ENCODE measurements at regions of chrX and their contacts with region 1.

Region 1: DNA sequence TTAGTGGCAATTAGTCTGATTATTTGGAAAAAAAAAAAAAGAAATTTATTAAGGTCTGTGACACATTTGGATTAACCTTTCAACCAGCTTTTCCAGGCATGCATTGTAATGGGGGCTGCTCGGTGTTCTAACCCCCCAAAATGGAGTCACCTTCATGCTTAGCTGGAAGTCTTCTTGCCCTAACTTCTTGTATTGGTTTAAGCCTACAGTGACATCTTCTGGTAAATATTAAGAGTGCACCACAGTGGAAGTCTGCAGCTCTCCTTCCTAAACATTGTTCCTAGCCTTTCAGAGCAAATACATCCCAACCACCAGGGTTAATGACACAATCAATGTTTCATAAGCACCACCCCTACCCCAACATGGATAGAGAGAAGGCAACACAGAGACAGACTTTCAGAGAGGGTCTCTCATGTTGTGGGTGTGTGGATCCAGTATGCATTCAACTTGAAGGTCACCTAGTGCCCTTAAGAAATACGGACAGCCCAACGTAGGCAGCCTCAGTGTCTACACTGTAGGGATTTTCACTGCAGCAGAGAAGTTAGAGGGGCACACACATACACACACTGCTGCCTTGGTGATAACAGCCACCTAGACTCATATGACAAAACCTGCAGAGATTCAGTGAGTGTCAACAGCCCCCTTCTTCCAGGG is 142.9 kb upstream of the MBNL3 start:
- DNase-seq: peak; percentile 2
- H3K4me3 Mint-ChIP-seq: no peak overlapping the region
- H3K27ac Mint-ChIP-seq: no peak overlapping the region
- H3K4me1 Mint-ChIP-seq: peaks cover 9% of the 10 kb centered on the region
- H3K27me3 Mint-ChIP-seq: no peaks in the 10 kb centered on the region
- CTCF ChIP-seq: peak; percentile 28

Region 2: GRCh38 chrX:132092439-132093065 is 539.2 kb before region 1 on chrX:
- CTCF ChIA-PET with region 1: interaction called, 6 read pairs
- intact Hi-C with region 1: loop called (anchors 5 kb)
- DNase-seq: peak; percentile 52
- H3K4me3 Mint-ChIP-seq: no peak overlapping the region
- H3K27ac Mint-ChIP-seq: no peak overlapping the region
- H3K4me1 Mint-ChIP-seq: no peaks in the 10 kb centered on the region
- H3K27me3 Mint-ChIP-seq: no peaks in the 10 kb centered on the region
- CTCF ChIP-seq: peak; percentile 41

Region 3: DNA sequence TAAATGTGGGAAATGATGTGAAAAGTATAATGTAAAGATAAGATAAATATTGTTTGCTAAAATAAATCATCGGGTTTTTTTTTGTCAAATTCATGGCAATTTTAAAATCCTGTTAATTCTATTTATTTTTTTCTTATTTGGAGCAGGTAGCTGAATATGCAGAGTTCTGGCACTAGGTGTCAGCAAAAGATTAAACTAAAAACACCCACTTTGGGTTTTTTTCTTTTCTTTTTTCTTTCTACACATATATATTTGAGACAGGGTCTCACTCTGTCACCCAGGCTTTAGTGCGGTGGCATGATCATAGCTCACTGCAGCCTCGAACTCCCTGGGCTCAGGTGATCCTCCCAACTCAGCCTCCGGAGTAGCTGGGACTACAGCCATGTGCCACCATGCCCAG is 405.5 kb before region 1 on chrX:
- CTCF ChIA-PET with region 1: interaction called, 5 read pairs
- intact Hi-C with region 1: loop called (anchors 5 kb)
- DNase-seq: no peak
- H3K4me3 Mint-ChIP-seq: no peak overlapping the region
- H3K27ac Mint-ChIP-seq: no peak overlapping the region
- H3K4me1 Mint-ChIP-seq: peaks cover 8% of the 10 kb centered on the region
- H3K27me3 Mint-ChIP-seq: no peaks in the 10 kb centered on the region
- CTCF ChIP-seq: no peak

Region 4: DNA sequence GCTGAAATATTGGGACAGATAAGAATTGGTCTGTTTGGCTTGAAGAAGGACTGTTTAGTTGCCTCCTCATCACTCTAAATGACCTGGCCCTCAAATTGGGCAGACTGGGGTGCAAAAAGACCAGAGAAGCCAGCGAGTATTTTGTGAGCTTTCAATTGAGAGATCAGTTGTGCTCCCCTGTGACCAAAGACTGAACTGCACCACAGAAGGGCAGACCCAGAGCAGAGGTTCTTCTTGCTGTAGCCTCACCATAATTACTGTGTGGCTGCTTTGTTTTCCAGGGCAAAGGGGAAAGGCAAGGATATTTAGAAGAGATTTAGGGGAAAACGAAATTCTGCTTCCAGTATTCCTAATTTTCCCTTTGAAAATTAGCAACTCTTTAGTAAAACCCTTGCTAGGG is 38.8 kb before region 1 on chrX:
- CTCF ChIA-PET with region 1: no interaction called
- intact Hi-C with region 1: no loop called
- DNase-seq: peak; percentile 20
- H3K4me3 Mint-ChIP-seq: no peak overlapping the region
- H3K27ac Mint-ChIP-seq: no peak overlapping the region
- H3K4me1 Mint-ChIP-seq: no peaks in the 10 kb centered on the region
- H3K27me3 Mint-ChIP-seq: no peaks in the 10 kb centered on the region
- CTCF ChIP-seq: peak; percentile 33

Measured in Calu3 (cell line).